IMR-90 (cell line): ENCODE measurements at regions of chr5 and their contacts with region 1.

Region 1: DNA sequence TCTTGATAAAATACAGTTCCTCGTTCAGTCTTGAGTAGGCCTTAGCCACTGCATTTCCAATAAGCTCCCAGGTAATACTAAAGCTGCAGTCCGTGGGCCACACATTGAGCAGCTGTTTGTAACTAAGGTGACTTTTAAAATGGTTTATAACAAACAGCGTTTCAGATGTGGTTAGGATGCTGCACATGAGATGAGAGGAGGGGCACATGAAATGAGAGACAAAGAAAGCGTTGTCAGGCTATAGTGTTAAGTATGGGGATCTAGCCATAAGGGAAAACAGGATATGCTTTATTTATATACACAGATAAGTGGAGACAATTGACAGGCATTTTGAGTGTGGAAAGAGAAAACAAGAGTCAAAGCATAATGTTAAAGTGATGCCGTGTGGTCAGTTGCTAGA is 89.9 kb downstream of the PAM start:
- DNase-seq: no peak
- ATAC-seq: no peak
- H3K4me3 ChIP-seq: no peak overlapping the region
- H3K27ac ChIP-seq: no peak overlapping the region
- H3K4me1 ChIP-seq: 0 out of 2 replicates have a peak, but pooled peaks cover 2% of the 10 kb centered on the region
- H3K27me3 ChIP-seq: no peaks in the 10 kb centered on the region
- CTCF ChIP-seq: no peak
- POLR2A ChIP-seq: no peak
- RAD21 ChIP-seq: no peak

Region 2: DNA sequence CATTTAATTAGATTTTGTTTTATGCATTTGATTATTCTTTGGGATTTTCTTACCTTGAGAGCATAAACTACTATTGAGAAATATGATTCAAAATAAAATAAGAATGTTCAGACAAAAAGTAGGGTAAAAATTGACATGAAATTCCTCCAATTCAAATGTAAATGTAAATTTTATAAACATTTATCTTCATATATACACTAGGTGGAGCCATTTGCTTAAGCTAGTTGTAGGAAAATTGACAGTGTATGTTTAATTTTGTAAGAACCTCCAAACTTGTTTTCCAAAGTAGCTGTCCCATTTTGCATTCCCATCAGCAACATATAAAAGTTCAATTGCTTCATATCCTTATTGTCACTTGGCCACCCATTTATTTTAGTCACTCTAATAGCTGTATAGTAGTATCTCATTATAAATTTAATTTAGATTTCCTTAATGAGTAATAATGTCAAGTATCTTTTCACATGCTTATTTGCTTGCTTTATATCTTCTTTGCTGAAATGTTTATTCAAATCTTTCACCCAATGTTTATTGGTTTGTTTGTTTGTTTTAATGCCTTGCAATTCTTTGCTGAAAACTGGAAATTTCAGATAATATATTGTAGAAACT is 308.6 kb before region 1 on chr5:
- CTCF ChIA-PET with region 1: no interaction called
- POLR2A ChIA-PET with region 1: no interaction called
- dilution Hi-C with region 1: no loop called
- in situ Hi-C with region 1: no loop called
- intact Hi-C with region 1: no loop called
- DNase-seq: peak; percentile 22
- ATAC-seq: no peak
- H3K4me3 ChIP-seq: no peak overlapping the region
- H3K27ac ChIP-seq: no peak overlapping the region
- H3K4me1 ChIP-seq: no peaks in the 10 kb centered on the region
- H3K27me3 ChIP-seq: 0 out of 2 replicates have a peak, but pooled peaks cover 1% of the 10 kb centered on the region
- CTCF ChIP-seq: peak; percentile 45
- POLR2A ChIP-seq: no peak
- RAD21 ChIP-seq: peak; percentile 51

Region 3: GRCh38 chr5:102807878-102808502 is 37.1 kb before region 1 on chr5:
- CTCF ChIA-PET with region 1: no interaction called
- POLR2A ChIA-PET with region 1: no interaction called
- dilution Hi-C with region 1: no loop called
- in situ Hi-C with region 1: no loop called
- intact Hi-C with region 1: loop called (anchors 5 kb)
- DNase-seq: peak; percentile 79
- ATAC-seq: no peak; the same call in 1 of the 2 replicates
- H3K4me3 ChIP-seq: no peak overlapping the region
- H3K27ac ChIP-seq: no peak overlapping the region
- H3K4me1 ChIP-seq: no peaks in the 10 kb centered on the region
- H3K27me3 ChIP-seq: no peaks in the 10 kb centered on the region
- CTCF ChIP-seq: no peak
- POLR2A ChIP-seq: no peak
- RAD21 ChIP-seq: no peak